HepG2 (cell line): ENCODE measurements at regions of chr20 and their contacts with region 1.

Region 1: DNA sequence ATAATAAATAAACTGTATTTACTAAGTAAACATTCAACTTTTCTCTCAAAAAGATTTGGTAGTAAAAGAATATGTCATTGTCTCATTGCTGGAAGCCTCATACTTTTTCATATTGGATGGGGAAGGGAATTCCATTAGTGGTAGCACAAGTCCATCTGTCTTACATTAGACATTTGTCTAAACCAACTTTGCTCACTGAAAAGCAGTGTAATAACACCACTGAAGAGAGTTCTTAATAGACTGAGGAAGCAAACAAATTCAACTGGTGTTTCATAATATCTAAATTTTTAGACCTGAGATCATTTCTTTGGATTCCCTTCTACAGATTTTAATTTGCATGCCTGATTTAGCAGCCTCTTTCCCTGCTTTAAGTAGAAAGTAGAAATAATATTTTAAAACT is 62.7 kb downstream of the PLCB1 start:
- DNase-seq: no peak
- ATAC-seq: no peak
- H3K4me3 ChIP-seq: no peak overlapping the region
- H3K27ac ChIP-seq: no peak overlapping the region
- H3K4me1 ChIP-seq: peaks cover 52% of the 10 kb centered on the region
- H3K27me3 ChIP-seq: no peaks in the 10 kb centered on the region
- CTCF ChIP-seq: no peak
- EP300 ChIP-seq: no peak
- POLR2A ChIP-seq: no peak
- RAD21 ChIP-seq: no peak

Region 2: GRCh38 chr20:8082025-8082424 is 112.7 kb before region 1 on chr20:
- CTCF ChIA-PET with region 1: no interaction called
- POLR2A ChIA-PET with region 1: no interaction called
- in situ Hi-C with region 1: no loop called
- intact Hi-C with region 1: no loop called
- DNase-seq: peak; percentile 15
- ATAC-seq: peak; percentile 78
- H3K4me3 ChIP-seq: no peak overlapping the region
- H3K27ac ChIP-seq: no peak overlapping the region
- H3K4me1 ChIP-seq: no peaks in the 10 kb centered on the region
- H3K27me3 ChIP-seq: no peaks in the 10 kb centered on the region
- CTCF ChIP-seq: no peak
- EP300 ChIP-seq: no peak
- POLR2A ChIP-seq: no peak
- RAD21 ChIP-seq: no peak

Region 3: DNA sequence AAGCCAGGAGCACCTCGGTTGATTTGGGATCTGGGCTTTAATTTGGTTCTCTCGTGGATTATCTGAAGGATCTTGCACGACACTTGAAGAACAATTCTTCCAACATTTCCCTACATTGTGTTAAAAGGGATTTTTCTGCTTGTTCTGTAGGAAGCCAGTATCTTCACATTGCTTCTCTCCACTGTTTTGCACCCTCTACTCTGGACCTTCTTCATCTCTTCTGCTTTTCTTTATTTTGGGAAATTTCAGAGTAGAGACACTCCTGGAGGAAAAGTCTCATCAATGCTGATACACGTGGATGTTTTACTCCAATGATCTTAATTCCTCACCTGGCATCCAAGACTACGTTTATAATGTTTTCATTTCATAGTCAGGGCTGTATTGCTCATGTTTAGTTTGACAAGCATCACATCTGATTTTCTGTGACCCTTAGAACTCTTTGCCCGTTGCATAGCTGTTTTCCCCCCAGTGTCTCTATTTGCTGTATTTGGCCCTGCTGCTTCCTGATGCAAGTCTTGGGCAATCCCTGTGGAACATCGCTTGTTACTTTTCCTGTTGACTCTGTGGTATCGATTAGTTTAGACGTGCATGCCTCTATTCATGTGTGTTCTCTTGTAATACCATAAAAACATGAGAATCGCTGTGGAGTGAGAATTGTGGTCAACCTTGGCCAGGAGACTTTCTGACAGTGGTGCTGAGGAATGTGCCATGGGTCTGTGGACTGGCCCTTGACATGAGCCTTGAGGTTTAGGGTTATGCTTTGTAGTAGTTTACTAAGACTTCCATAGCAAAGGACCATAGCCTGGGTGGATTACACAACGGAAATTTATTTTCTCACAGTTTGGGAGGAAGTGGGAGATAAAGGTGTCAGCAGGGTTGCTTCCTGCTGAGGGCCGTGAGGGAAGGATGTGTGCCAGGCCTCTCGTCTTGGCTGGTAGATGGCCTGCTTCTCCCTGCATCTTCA is 50.2 kb before region 1 on chr20:
- CTCF ChIA-PET with region 1: no interaction called
- POLR2A ChIA-PET with region 1: interaction called, 4 read pairs
- in situ Hi-C with region 1: no loop called
- intact Hi-C with region 1: loop called (anchors 1 kb)
- DNase-seq: peak; percentile 100
- ATAC-seq: peak; percentile 97
- H3K4me3 ChIP-seq: peak overlapping the region in 1 of 3 experiments; percentile 13; a peak in 1 of 6 replicates
- H3K27ac ChIP-seq: peak overlapping the region; percentile 70
- H3K4me1 ChIP-seq: peaks cover 48% of the 10 kb centered on the region
- H3K27me3 ChIP-seq: no peaks in the 10 kb centered on the region
- CTCF ChIP-seq: peak; percentile 35; the same call in 1 of the 2 replicates
- EP300 ChIP-seq: peak; percentile 98 to 99
- POLR2A ChIP-seq: no peak
- RAD21 ChIP-seq: peak; percentile 46

Region 4: GRCh38 chr20:8156235-8157079 is 38.3 kb before region 1 on chr20:
- CTCF ChIA-PET with region 1: no interaction called
- POLR2A ChIA-PET with region 1: interaction called, 9 read pairs
- in situ Hi-C with region 1: no loop called
- intact Hi-C with region 1: loop called (anchors 5 kb)
- DNase-seq: peak; percentile 90
- ATAC-seq: peak; percentile 95
- H3K4me3 ChIP-seq: no peak overlapping the region; a peak in 1 of 6 replicates
- H3K27ac ChIP-seq: peak overlapping the region; percentile 59
- H3K4me1 ChIP-seq: peaks cover 54% of the 10 kb centered on the region
- H3K27me3 ChIP-seq: no peaks in the 10 kb centered on the region
- CTCF ChIP-seq: no peak
- EP300 ChIP-seq: peak; percentile 40 to 90; a peak in 2 of 4 replicates
- POLR2A ChIP-seq: no peak
- RAD21 ChIP-seq: no peak

Region 5: GRCh38 chr20:8208998-8209440 is 14.3 kb after region 1 on chr20:
- CTCF ChIA-PET with region 1: no interaction called
- POLR2A ChIA-PET with region 1: interaction called, 16 read pairs
- in situ Hi-C with region 1: no loop called
- intact Hi-C with region 1: loop called (anchors 1 kb)
- DNase-seq: no peak
- ATAC-seq: no peak
- H3K4me3 ChIP-seq: no peak overlapping the region
- H3K27ac ChIP-seq: no peak overlapping the region
- H3K4me1 ChIP-seq: peaks cover 75% of the 10 kb centered on the region
- H3K27me3 ChIP-seq: no peaks in the 10 kb centered on the region
- CTCF ChIP-seq: no peak
- EP300 ChIP-seq: peak in 1 of 2 experiments; percentile 49; a peak in 1 of 4 replicates
- POLR2A ChIP-seq: no peak
- RAD21 ChIP-seq: no peak

Region 6: DNA sequence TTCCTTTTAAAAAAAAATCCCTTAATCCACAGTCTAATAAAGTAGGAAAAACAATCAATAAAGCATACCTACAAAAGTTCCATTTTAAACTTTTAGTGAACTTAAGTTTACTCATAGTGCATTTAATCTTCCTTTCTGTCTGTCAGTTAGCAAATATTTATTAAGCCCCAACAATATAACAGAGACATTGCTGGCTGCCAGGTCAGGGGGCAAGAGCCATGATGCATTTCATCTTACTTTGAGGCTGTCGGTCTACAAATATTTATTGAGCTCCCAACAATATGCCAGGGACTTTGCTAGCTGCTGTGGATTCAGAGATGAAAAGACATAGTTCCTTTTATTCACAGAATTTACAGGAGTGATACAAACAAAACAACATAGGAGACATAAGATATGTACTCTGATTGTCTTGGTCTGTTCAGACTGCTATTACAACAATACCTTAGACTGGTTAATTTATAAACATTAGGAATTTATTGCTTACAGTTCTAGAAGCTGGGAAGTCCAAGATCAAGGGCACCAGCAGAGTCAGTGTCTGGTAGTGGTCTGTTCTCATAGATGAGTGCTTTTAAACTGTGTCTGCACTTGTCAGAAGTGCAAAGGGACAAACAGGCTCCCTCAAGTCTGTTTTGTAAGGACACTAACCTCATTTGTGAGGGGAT is 55.9 kb after region 1 on chr20:
- CTCF ChIA-PET with region 1: no interaction called
- POLR2A ChIA-PET with region 1: no interaction called
- in situ Hi-C with region 1: no loop called
- intact Hi-C with region 1: loop called (anchors 2 kb)
- DNase-seq: peak; percentile 100
- ATAC-seq: peak; percentile 98
- H3K4me3 ChIP-seq: peak overlapping the region in 2 of 3 experiments; percentile 12 to 19; a peak in 1 of 6 replicates
- H3K27ac ChIP-seq: peak overlapping the region; percentile 58
- H3K4me1 ChIP-seq: peaks cover 73% of the 10 kb centered on the region
- H3K27me3 ChIP-seq: no peaks in the 10 kb centered on the region
- CTCF ChIP-seq: no peak
- EP300 ChIP-seq: peak; percentile 87 to 99; a peak in 3 of 4 replicates
- POLR2A ChIP-seq: no peak
- RAD21 ChIP-seq: no peak

Region 7: DNA sequence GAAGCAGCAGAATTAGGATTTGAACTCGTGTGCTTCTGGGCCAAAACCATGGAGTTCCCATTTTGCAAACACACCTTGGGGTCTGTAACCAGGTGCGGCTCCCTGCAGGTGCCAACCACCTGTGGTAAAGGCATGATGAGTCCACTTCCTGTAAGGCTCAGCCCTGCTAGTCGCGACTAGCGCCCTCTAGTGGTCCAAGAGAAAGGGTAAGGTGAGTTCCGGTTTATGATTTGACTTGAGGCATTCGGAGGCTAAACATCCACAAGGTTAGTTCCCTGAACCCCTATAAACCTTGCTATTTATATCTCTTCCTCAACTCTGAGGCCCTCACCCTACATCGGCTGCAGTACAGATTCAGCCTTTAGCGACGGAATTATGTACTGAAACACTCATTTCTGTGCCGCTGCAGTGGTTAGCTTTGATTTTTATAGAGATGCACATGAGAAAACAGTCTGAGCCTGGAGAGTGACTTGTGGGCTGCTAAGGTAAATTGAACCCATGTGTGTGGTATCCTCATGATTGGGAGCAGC is 110.8 kb after region 1 on chr20:
- CTCF ChIA-PET with region 1: no interaction called
- POLR2A ChIA-PET with region 1: no interaction called
- in situ Hi-C with region 1: no loop called
- intact Hi-C with region 1: loop called (anchors 5 kb)
- DNase-seq: peak; percentile 83
- ATAC-seq: peak; percentile 97
- H3K4me3 ChIP-seq: no peak overlapping the region
- H3K27ac ChIP-seq: no peak overlapping the region
- H3K4me1 ChIP-seq: no peaks in the 10 kb centered on the region
- H3K27me3 ChIP-seq: no peaks in the 10 kb centered on the region
- CTCF ChIP-seq: peak; percentile 87
- EP300 ChIP-seq: no peak
- POLR2A ChIP-seq: no peak
- RAD21 ChIP-seq: peak; percentile 87

Region 8: GRCh38 chr20:8331740-8332412 is 137.2 kb after region 1 on chr20:
- CTCF ChIA-PET with region 1: no interaction called
- POLR2A ChIA-PET with region 1: no interaction called
- in situ Hi-C with region 1: no loop called
- intact Hi-C with region 1: loop called (anchors 1 kb)
- DNase-seq: peak; percentile 86
- ATAC-seq: peak; percentile 60
- H3K4me3 ChIP-seq: peak overlapping the region in 2 of 3 experiments; percentile 1 to 44; a peak in 2 of 6 replicates
- H3K27ac ChIP-seq: peak overlapping the region; percentile 77
- H3K4me1 ChIP-seq: peaks cover 78% of the 10 kb centered on the region
- H3K27me3 ChIP-seq: no peaks in the 10 kb centered on the region
- CTCF ChIP-seq: no peak
- EP300 ChIP-seq: peak in 1 of 2 experiments; percentile 58; a peak in 2 of 4 replicates
- POLR2A ChIP-seq: no peak
- RAD21 ChIP-seq: peak; percentile 28; the same call in 1 of the 2 replicates